Right ventricle myocardium inferior (tissue), 1 donor: ENCODE measurements at regions of chr7 and their contacts with region 1.

Region 1: DNA sequence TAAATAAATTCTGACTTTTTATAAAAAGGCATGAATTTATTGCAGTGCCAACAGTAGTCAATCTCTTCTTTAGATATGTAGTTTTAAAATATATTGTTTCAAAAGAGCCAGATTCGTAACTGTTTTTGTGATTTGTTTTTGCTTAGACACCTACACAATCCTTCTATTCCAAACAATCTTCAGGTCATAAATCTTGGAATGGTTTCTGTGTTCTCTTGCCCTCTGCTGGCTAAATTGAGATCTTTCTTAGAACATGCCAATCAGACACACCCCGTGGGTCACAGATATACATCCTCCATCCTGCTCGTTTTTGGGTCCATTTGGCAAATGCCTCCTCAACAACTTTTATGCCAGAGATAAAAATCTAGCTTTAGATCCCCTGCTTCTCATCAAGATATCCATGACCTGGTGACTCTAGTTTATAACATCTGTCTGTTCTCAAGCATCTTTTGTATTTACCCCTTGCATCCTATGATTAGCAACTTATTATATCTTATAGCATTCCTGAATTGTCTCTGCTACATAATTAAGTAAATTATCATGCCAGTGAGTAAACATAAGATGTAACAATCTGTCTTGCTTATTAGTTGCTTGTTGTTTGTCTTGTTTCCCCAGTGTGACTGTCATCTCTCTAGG is 35.3 kb upstream of the IFRD1 start:
- DNase-seq: no peak
- ATAC-seq: no peak

Region 2: DNA sequence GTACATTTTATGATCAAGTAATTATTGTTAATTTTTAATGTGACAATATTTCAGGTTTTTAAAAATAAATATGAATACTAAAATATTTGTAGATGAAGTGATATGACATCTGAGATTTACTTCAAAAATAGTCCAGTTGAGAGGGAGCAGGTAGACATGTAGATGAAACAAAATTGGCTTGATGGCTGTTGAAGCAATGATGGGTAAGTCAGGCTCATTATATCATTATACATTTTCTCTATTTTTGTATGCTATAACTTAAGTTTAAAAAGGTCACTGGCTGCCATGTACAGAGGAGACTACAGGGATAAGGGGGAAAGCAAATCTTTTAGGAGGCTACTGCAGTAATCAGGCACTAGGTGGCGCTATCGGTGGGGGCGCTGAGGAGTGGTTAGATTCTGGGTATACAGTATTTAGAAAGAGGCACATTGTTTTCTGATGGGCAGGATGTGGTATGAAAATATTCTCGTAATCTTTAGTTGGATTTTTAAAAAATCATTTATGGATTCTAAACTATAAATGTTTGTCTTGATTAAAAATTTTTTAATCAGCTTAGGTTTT is 662.9 kb before region 1 on chr7:
- intact Hi-C with region 1: loop called (anchors 5 kb)
- DNase-seq: peak; percentile 79
- ATAC-seq: no peak

Region 3: DNA sequence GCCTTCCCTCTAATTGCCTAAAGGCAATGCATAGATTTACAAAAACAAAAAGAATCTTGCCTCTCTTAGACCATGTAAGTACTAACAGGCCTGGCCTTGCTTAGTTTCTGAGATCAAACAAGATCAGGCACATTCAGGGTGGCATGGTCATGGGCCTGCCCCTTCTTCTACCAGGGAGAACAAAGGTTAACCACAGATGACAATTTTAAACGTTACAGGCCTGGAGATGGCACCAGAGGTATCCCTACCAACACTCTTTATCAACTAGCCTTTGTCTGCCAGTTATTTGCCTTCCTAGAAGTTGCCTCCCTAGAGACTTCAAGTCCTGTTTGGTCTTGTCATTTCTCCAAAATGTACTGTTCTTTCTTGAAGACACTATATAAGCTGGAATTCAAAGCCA is 461.4 kb before region 1 on chr7:
- intact Hi-C with region 1: loop called (anchors 5 kb)
- DNase-seq: no peak
- ATAC-seq: peak; percentile 73

Region 4: DNA sequence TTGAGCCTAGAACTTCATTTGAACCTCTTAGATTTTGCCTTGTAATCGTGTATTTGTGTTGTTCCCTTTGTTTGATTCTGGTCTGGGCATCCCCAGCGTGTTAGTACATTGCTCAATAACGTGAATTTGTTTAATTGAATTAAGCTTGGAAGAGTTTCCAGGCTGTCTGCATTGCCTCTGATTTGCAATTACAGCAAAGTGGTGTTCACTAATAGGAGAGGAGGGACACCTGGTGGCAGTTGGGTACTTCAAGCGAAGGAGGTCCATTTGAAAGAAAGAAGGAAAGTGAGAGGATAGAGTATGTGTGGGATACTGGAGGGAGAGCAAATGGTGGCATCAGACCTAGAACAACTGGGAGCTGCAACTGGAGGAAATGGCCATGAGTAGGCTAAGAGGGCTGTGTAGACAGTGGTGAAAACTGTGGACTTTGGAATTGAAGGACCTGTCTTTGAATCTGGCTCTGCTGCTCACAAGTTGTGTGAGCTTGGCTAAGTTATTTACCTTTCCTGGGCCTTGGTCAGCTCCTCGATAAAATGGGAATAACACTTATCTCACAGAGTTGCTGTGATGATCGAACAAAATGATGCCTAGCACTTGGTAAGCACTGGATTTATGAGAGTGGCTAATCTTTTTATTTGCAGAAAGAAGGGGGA is 81.0 kb after region 1 on chr7:
- intact Hi-C with region 1: loop called (anchors 5 kb)
- DNase-seq: no peak
- ATAC-seq: peak; percentile 88